BJ (cell line): ENCODE measurements at regions of chr19 and their contacts with region 1.

Region 1: GRCh38 chr19:12847159-12848139 is 9.1 kb downstream of the MAST1 start:
- DNase-seq: peak; percentile 16
- H3K4me3 ChIP-seq: peak overlapping the region; percentile 9; the same call in 1 of the 2 replicates
- H3K27me3 ChIP-seq: peaks cover 2% of the 10 kb centered on the region; the same call in 1 of the 2 replicates
- CTCF ChIP-seq: peak; percentile 77

Region 2: GRCh38 chr19:12676384-12676792 is 171.1 kb before region 1 on chr19:
- CTCF ChIA-PET with region 1: interaction called, 16 read pairs
- POLR2A ChIA-PET with region 1: no interaction called
- DNase-seq: no peak
- H3K4me3 ChIP-seq: no peak overlapping the region
- H3K27me3 ChIP-seq: no peaks in the 10 kb centered on the region
- CTCF ChIP-seq: peak; percentile 91

Region 3: DNA sequence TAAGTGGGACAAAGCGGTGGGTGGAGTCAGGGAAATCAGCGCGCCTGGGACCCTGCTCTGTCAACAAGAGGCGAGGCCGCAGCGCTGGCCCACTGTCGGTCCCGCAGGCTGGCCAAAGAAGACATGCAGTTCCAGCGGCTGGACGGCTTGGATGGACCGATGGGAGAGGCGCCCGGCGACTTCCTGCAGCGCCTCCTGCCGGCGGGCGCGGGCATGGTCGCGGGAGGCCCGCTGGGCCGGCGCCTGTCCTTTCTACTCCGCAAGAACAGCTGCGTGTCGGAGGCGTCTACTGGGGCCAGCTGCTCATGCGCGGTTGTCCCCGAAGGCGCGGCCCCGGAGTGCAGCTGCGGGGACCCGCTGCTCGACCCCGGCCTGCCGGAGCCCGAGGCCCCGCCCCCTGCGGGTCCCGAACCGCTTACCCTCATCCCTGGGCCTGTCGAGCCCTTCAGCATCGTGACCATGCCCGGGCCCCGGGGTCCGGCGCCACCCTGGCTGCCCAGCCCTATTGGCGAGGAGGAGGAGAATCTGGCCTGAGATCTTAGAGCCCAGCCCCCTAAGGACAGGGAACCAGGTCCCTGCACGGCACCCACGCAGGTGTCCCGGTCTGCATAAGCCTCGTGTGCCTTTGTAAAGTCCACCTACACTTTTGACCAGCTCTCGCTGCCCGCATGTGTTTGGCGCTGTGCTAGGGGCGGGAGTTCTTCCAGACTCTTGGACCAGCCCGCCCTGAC is 89.7 kb before region 1 on chr19:
- CTCF ChIA-PET with region 1: interaction called, 355 read pairs
- POLR2A ChIA-PET with region 1: no interaction called
- DNase-seq: no peak
- H3K4me3 ChIP-seq: peak overlapping the region; percentile 33
- H3K27me3 ChIP-seq: peaks cover 5% of the 10 kb centered on the region; the same call in 1 of the 2 replicates
- CTCF ChIP-seq: peak; percentile 75

Region 4: GRCh38 chr19:12777217-12778016 is 70.0 kb before region 1 on chr19:
- CTCF ChIA-PET with region 1: interaction called, 31 read pairs
- POLR2A ChIA-PET with region 1: no interaction called
- DNase-seq: no peak
- H3K4me3 ChIP-seq: peak overlapping the region; percentile 65
- H3K27me3 ChIP-seq: no peaks in the 10 kb centered on the region
- CTCF ChIP-seq: peak; percentile 99

Region 5: GRCh38 chr19:12801466-12802266 is 45.8 kb before region 1 on chr19 and contains the starts of genes PRDX2 and THSD8:
- CTCF ChIA-PET with region 1: interaction called, 14 read pairs
- POLR2A ChIA-PET with region 1: no interaction called
- DNase-seq: no peak
- H3K4me3 ChIP-seq: peak within 1 kb of the TSS; percentile 93
- H3K27me3 ChIP-seq: no peaks in the 10 kb centered on the region
- CTCF ChIP-seq: no peak
- polyA plus RNA-seq, gene PRDX2: 165 and 267 TPM in 2 replicates
- polyA plus RNA-seq, gene THSD8: 0.75 and 2.6 TPM in 2 replicates

Region 6: GRCh38 chr19:12859546-12859945 is 12.1 kb after region 1 on chr19:
- CTCF ChIA-PET with region 1: interaction called, 21 read pairs
- POLR2A ChIA-PET with region 1: no interaction called
- DNase-seq: no peak
- H3K4me3 ChIP-seq: no peak overlapping the region
- H3K27me3 ChIP-seq: 0 out of 2 replicates have a peak, but pooled peaks cover 1% of the 10 kb centered on the region
- CTCF ChIP-seq: no peak

Region 7: GRCh38 chr19:12872941-12873890 is 25.8 kb after region 1 on chr19:
- CTCF ChIA-PET with region 1: interaction called, 12 read pairs
- POLR2A ChIA-PET with region 1: no interaction called
- DNase-seq: peak; percentile 22
- H3K4me3 ChIP-seq: peak overlapping the region; percentile 33
- H3K27me3 ChIP-seq: no peaks in the 10 kb centered on the region
- CTCF ChIP-seq: peak; percentile 24; the same call in 1 of the 2 replicates